Mammary epithelial cell (primary cell): ENCODE measurements at regions of chr6 and their contacts with region 1.

Region 1: DNA sequence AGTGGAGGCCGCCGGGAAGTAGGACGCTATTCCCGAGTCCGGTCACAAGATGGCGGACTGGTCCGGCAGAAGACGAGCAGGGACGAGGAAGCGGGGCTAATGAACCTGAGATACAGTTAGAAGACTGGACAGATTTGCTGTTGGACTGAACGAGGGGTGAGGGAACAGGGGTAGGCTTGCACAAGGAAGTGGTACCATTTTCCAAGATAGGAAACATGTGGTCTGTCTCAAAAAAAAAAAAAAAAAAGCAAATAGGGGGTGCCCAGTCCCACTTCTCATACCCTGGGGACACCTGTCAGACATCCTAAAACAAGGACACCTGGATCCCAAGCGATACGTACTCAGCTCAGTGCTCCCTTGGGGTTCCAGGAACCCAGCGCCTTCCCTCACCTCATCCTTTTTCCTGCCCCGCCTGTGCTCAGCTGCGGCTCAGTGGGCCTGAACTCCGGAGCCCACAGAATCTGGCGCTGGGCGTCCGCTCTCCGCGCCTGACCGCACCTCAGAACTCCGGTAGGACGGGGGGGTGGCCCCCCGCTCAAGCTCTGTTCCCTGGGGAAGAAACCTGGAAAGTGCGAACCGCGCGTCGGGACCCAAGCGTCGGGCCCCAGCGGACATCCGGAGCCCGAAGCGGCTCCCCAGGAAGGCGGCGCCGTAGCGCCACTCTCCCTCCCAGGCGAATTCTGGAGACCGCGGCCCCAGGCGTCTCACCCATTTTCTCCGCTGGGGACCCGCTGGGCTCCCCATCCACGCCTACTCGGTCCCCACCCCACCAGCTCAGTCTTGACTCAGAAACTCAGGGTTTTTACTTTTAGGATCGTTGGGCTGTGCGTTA is at the start of gene LY6G5C:
- DNase-seq: peak; percentile 69
- H3K4me3 ChIP-seq: peak within 1 kb of the TSS; percentile 42 to 53 (median 51)
- H3K27ac ChIP-seq: peak within 1 kb of the TSS; percentile 11
- H3K4me1 ChIP-seq: peaks cover 11% of the 10 kb centered on the region
- H3K27me3 ChIP-seq: no peaks in the 10 kb centered on the region
- CTCF ChIP-seq: peak; percentile 63 to 71
- total RNA-seq, gene LY6G5C: 1.4 TPM in 1 of 2 donors, not detected in the other

Region 2: DNA sequence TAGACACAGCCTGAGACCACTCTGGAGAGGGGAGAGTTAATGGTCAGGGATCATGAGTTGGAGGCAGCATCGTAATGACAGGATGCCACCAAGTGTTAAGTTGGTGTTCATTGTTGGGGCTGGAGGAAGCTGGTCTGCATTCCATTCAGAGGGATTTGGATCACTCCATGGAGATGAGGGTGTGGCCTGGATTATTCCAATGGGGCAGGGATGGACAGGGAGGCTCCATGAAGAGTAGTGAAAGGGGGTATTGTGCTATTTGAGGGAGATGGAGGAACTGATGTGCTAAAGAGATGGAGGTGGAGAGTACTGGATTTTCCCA is 82.5 kb after region 1 on chr6:
- CTCF ChIA-PET with region 1: no interaction called
- dilution Hi-C with region 1: no loop called
- in situ Hi-C with region 1: loop called in 1 of 2 experiments (anchors 5 kb)
- intact Hi-C with region 1: no loop called
- DNase-seq: peak; percentile 33
- H3K4me3 ChIP-seq: no peak overlapping the region
- H3K27ac ChIP-seq: no peak overlapping the region
- H3K4me1 ChIP-seq: peaks cover 12% of the 10 kb centered on the region
- H3K27me3 ChIP-seq: no peaks in the 10 kb centered on the region
- CTCF ChIP-seq: no peak

Region 3: DNA sequence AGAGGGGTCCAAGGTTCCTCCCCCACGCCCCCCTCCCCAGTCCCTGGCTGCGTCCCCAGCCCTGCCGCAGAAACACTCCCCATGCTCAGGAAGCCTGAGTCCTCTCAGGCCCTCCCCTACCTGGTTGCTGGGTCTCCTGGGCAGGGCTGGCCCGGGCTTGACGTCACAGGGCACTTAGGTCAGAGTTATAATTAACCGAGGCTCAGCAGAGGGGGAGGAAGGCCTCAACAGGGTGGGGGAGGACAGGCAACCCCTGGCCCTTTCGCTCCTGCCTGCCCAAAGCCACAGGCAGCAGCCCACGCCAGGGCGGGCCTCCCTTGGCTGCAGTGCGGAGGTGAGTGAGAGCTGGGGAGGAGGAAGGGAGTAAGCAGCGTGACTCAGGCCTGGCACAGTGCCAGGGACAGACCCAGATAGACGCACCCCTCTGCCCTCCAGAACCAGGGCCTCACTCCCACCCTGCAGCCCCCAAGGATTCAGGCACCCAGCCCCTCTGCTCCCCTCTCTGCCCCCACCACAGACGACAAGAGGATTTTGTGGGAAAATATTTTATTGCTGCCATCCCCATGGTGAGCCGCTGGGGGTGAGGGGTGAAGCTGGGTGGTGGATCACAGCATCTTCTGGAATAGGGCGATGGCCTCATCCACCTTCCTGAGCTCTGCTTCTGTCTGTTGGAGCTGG is 96.1 kb after region 1 on chr6 and contains the start of gene VWA7:
- CTCF ChIA-PET with region 1: no interaction called
- dilution Hi-C with region 1: no loop called
- in situ Hi-C with region 1: no loop called
- intact Hi-C with region 1: no loop called
- DNase-seq: peak; percentile 91
- H3K4me3 ChIP-seq: peak within 1 kb of the TSS in 2 of 3 experiments; percentile 3 to 26
- H3K27ac ChIP-seq: peak within 1 kb of the TSS; percentile 44
- H3K4me1 ChIP-seq: peaks cover 26% of the 10 kb centered on the region
- H3K27me3 ChIP-seq: no peaks in the 10 kb centered on the region
- CTCF ChIP-seq: no peak
- total RNA-seq, gene VWA7: 1.2 to 1.5 TPM

Region 4: DNA sequence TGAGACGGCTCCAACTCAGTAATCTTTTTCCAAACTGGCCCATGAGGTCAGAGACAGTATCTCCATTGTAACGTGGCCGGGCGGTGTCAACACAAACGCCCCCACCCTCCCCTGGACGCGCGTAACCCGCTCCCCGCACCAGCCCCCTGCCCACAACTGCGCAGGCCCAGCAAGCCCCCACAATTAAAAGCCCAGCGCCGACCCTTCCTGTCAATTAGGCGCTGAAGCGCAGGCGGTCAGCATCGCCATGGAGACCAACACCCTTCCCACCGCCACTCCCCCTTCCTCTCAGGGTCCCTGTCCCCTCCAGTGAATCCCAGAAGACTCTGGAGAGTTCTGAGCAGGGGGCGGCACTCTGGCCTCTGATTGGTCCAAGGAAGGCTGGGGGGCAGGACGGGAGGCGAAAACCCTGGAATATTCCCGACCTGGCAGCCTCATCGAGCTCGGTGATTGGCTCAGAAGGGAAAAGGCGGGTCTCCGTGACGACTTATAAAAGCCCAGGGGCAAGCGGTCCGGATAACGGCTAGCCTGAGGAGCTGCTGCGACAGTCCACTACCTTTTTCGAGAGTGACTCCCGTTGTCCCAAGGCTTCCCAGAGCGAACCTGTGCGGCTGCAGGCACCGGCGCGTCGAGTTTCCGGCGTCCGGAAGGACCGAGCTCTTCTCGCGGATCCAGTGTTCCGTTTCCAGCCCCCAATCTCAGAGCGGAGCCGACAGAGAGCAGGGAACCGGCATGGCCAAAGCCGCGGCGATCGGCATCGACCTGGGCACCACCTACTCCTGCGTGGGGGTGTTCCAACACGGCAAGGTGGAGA is 134.2 kb after region 1 on chr6 and contains the starts of genes HSPA1A and HSPA1L:
- CTCF ChIA-PET with region 1: no interaction called
- dilution Hi-C with region 1: no loop called
- in situ Hi-C with region 1: no loop called
- intact Hi-C with region 1: no loop called
- DNase-seq: peak; percentile 95
- H3K4me3 ChIP-seq: peak within 1 kb of the TSS; percentile 53 to 85 (median 75)
- H3K27ac ChIP-seq: peak within 1 kb of the TSS; percentile 81
- H3K4me1 ChIP-seq: peaks cover 15% of the 10 kb centered on the region
- H3K27me3 ChIP-seq: no peaks in the 10 kb centered on the region
- CTCF ChIP-seq: no peak
- total RNA-seq, gene HSPA1A: 67.8 to 99.5 TPM
- total RNA-seq, gene HSPA1L: 0.42 to 0.83 TPM

Region 5: DNA sequence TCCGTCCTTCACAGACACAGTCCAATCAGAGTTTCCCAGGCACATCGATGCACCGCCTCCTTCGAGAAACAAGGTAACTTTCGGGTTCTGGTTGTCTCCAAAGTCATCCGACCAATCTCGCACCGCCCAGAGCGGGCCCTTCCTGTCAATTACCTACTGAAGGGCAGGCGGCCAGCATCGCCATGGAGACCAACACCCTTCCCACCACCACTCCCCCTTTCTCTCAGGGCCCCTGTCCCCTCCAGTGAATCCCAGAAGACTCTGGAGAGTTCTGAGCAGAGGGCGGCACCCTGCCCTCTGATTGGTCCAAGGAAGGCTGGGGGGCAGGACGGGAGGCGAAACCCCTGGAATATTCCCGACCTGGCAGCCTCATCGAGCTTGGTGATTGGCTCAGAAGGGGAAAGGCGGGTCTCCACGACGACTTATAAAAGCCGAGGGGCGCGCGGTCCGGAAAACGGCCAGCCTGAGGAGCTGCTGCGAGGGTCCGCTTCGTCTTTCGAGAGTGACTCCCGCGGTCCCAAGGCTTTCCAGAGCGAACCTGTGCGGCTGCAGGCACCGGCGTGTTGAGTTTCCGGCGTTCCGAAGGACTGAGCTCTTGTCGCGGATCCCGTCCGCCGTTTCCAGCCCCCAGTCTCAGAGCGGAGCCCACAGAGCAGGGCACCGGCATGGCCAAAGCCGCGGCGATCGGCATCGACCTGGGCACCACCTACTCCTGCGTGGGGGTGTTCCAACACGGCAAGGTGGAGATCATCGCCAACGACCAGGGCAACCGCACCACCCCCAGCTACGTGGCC is 146.4 kb after region 1 on chr6 and contains the start of gene HSPA1B:
- CTCF ChIA-PET with region 1: interaction called, 3 read pairs
- dilution Hi-C with region 1: no loop called
- in situ Hi-C with region 1: no loop called
- intact Hi-C with region 1: loop called (anchors 1 kb)
- DNase-seq: peak; percentile 100
- H3K4me3 ChIP-seq: peak within 1 kb of the TSS; percentile 64 to 75 (median 67)
- H3K27ac ChIP-seq: peak within 1 kb of the TSS; percentile 90
- H3K4me1 ChIP-seq: peaks cover 49% of the 10 kb centered on the region
- H3K27me3 ChIP-seq: no peaks in the 10 kb centered on the region
- CTCF ChIP-seq: no peak
- total RNA-seq, gene HSPA1B: 60.8 to 74.8 TPM

Region 6: DNA sequence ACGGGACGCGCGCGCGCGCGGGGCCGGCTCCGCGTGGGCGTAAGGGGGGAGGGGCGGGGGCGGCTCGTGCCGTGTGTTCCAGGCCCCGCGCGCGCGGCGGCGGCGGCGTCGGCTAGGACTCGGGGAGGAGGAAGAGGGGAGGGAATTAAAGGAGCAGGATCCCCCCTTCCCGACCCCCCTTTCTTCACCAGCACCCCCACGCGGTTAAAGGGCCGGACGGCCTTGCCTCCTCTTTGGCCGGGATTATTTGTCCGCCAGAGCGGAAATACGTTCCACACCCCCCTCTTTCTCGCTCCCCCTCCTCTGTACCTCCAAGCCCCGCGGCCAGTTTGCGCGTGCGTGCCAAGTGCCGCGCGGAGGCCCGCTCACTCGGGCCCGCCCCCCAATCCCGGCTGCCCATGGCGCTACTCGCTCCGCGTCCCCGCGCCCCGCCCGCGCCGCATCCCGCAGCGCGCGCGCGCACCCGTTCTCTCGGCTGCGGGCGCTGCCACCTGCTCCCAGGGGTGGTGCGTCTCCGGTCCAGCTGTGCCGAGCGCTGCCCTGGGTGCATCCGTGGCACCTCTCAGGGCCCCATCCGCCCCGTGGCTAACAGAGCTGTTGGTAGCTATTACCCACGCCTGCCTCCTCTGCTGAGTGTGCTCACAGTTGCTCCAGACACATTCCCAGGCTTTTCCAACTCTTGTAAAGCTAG is 221.0 kb after region 1 on chr6 and contains the start of gene ZBTB12:
- CTCF ChIA-PET with region 1: no interaction called
- dilution Hi-C with region 1: no loop called
- in situ Hi-C with region 1: no loop called
- intact Hi-C with region 1: loop called (anchors 5 kb)
- DNase-seq: peak; percentile 82
- H3K4me3 ChIP-seq: peak within 1 kb of the TSS; percentile 35 to 67 (median 55)
- H3K27ac ChIP-seq: no peak within 1 kb of the TSS
- H3K4me1 ChIP-seq: peaks cover 11% of the 10 kb centered on the region
- H3K27me3 ChIP-seq: no peaks in the 10 kb centered on the region
- CTCF ChIP-seq: no peak
- total RNA-seq, gene ZBTB12: 0.33 to 2.7 TPM